Ovary (tissue), 10 donors: ENCODE measurements at regions of chr13 and their contacts with region 1.

Region 1: GRCh38 chr13:34174671-34175145 is 356.8 kb downstream of the RFC3 start:
- DNase-seq: no peak
- H3K4me3 ChIP-seq: no peak overlapping the region
- H3K27ac ChIP-seq: no peak overlapping the region
- H3K4me1 ChIP-seq: no peaks in the 10 kb centered on the region
- H3K27me3 ChIP-seq: no peaks in the 10 kb centered on the region
- CTCF ChIP-seq: no peak
- EP300 ChIP-seq: no peak
- POLR2A ChIP-seq: no peak

Region 2: DNA sequence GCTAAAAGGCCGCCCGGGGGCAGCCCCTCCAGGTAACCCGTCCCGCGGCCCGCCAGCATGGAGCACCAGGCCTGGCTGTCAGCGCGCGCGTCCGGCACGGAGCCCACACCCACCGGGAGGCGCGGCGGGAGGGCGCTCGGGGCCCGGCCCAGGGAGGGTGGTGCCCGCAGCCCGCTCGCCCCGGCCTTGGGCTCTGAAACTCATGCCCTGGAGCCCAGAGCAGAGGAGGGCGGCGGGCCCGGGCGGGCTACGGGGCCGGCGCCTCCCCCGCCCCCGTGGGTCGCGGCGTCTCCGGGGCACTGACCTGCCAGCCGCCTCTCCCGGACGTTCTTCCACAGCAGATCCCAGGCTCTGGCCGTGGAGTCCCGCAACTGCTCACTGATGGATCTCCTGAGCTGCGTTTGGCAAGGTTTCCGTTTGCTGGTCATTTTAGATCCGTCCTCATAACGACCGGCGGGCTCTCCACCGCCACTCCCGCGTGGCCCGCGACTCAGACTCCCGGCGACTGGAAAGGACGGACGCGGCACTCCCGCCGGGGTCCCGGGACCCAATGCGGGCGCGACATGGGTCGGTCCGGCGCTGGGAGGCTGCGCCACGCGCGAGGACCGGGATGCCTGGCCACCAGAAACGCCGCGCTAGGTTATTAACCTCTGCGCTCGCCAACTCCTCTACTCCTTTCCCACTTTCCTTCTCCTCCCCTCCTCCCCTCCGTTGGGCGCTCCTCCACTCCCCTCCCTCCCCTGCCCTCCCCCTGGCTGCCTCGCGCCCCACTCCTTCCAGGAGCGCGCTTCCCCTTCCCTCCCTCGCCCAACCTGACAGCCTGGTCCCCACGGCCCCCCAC is 824.5 kb before region 1 on chr13:
- intact Hi-C with region 1: no loop called
- DNase-seq: peak; percentile 54 to 69 (median 63)
- H3K4me3 ChIP-seq: peak overlapping the region; percentile 73
- H3K27ac ChIP-seq: peak overlapping the region; percentile 45 to 56
- H3K4me1 ChIP-seq: peaks cover 5% of the 10 kb centered on the region
- H3K27me3 ChIP-seq: no peaks in the 10 kb centered on the region
- CTCF ChIP-seq: no peak
- EP300 ChIP-seq: no peak
- POLR2A ChIP-seq: no peak

Region 3: GRCh38 chr13:34224877-34225276 is 50.2 kb after region 1 on chr13:
- intact Hi-C with region 1: loop called in 1 of 4 experiments (anchors 2 kb)
- DNase-seq: no peak
- H3K4me3 ChIP-seq: no peak overlapping the region
- H3K27ac ChIP-seq: no peak overlapping the region
- H3K4me1 ChIP-seq: no peaks in the 10 kb centered on the region
- H3K27me3 ChIP-seq: no peaks in the 10 kb centered on the region
- CTCF ChIP-seq: no peak
- EP300 ChIP-seq: no peak
- POLR2A ChIP-seq: no peak